AG04449 (cell line): ENCODE measurements at regions of chr3 and their contacts with region 1.

Region 1: GRCh38 chr3:39013289-39013688 is 38.5 kb downstream of the SCN11A start:
- DNase-seq: no peak
- H3K4me3 ChIP-seq: no peak overlapping the region
- CTCF ChIP-seq: no peak

Region 2: GRCh38 chr3:38925351-38925750 is 87.9 kb before region 1 on chr3:
- CTCF ChIA-PET with region 1: no interaction called
- POLR2A ChIA-PET with region 1: no interaction called
- DNase-seq: no peak
- H3K4me3 ChIP-seq: no peak overlapping the region
- CTCF ChIP-seq: no peak

Region 3: GRCh38 chr3:39028546-39028945 is 15.3 kb after region 1 on chr3:
- CTCF ChIA-PET with region 1: interaction called, 10 read pairs
- POLR2A ChIA-PET with region 1: no interaction called
- DNase-seq: no peak
- H3K4me3 ChIP-seq: no peak overlapping the region
- CTCF ChIP-seq: no peak